ENCODE measurements at regions of chr3 and their contacts with region 1.

Region 1: GRCh38 chr3:119293871-119294695 is at the start of gene ARHGAP31:
- DNase-seq: peak; percentile 46
- H3K4me3 ChIP-seq: peak within 1 kb of the TSS; percentile 89
- H3K27ac ChIP-seq: peak within 1 kb of the TSS; percentile 73
- H3K27me3 ChIP-seq: no peaks in the 10 kb centered on the region
- CTCF ChIP-seq: no peak
- polyA plus RNA-seq, gene ARHGAP31: 14.1 and 16.6 TPM in 2 replicates

Region 2: DNA sequence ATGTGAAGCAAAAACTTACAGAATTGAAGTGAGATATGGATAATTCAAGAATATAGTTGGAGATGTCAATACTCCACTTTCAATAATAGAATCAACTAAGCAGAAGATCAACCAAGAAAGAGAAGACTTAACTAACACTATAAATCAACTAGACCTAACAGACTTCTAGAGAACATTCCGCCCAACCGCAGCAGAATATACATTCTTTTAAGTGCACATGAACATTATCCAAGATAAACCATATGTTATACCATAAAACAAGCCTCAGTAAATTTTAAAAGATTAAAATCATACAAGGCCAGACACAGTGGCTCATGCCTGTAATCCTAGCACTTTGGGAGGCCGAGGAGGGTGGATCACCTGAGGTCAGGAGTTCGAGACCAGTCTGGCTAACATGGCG is 153.6 kb before region 1 on chr3:
- CTCF ChIA-PET with region 1: interaction called, 10 read pairs
- POLR2A ChIA-PET with region 1: no interaction called
- DNase-seq: no peak
- H3K4me3 ChIP-seq: no peak overlapping the region
- H3K27ac ChIP-seq: no peak overlapping the region
- H3K27me3 ChIP-seq: peaks cover 2% of the 10 kb centered on the region
- CTCF ChIP-seq: no peak

Region 3: DNA sequence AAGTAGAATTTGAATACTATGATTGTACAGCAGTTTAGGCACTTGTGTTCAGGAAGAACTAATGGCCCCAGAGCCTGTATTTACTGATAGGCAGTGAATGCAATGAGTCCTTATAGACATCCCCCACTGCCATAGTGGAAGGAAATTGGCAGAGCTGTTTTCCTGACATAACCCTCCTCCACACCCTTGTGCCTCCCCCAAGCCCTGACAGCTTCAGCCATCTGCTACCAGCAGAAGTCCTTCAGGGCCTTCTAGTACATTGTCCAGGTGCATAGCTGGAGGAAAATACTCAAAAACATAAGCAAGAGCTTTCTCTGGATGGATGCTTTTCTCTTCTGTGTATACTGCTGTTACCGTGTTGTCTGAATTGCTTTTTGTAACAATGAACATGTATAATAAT is 20.7 kb after region 1 on chr3:
- CTCF ChIA-PET with region 1: no interaction called
- POLR2A ChIA-PET with region 1: no interaction called
- DNase-seq: no peak
- H3K4me3 ChIP-seq: no peak overlapping the region
- H3K27ac ChIP-seq: no peak overlapping the region
- H3K27me3 ChIP-seq: no peaks in the 10 kb centered on the region
- CTCF ChIP-seq: no peak

Region 4: GRCh38 chr3:119352849-119353502 is 58.9 kb after region 1 on chr3:
- CTCF ChIA-PET with region 1: interaction called, 7 read pairs
- POLR2A ChIA-PET with region 1: interaction called, 12 read pairs
- DNase-seq: peak; percentile 51
- H3K4me3 ChIP-seq: no peak overlapping the region
- H3K27ac ChIP-seq: peak overlapping the region; percentile 88
- H3K27me3 ChIP-seq: no peaks in the 10 kb centered on the region
- CTCF ChIP-seq: peak; percentile 58

Region 5: GRCh38 chr3:119524931-119525662 is 231.0 kb after region 1 on chr3:
- CTCF ChIA-PET with region 1: no interaction called
- POLR2A ChIA-PET with region 1: no interaction called
- DNase-seq: no peak
- H3K4me3 ChIP-seq: no peak overlapping the region
- H3K27ac ChIP-seq: no peak overlapping the region
- H3K27me3 ChIP-seq: no peaks in the 10 kb centered on the region
- CTCF ChIP-seq: peak; percentile 51

Region 6: DNA sequence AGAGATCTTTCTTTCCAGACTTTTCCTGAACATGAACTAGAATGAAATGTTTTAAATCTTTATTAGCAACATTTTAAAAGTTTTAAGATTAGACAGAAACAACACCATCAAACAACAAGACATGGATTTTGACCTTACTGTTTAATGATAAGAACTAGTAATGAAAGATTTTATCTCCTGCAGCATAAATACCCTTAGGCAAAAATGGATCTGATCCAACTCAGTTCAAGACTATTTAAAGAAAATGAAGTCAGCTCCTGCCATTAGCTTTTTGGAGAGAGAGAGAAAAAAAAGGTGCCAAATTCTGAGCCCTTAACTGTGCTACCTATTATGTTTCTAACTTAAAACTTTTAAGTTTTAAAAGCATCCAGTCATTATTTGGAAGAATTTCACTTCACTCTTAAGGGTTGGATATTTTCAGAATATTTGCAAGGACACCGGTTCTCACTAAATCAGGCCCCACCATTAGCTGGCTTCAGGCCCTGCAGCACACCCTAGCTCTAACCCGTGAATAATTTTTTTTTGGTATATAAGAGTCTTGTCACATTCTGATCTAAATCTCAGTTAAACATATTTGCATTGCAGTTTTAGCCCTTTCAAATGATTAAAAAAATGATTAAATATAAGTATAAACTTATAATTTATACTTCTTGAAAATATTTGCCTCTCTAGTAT is 547.9 kb after region 1 on chr3:
- CTCF ChIA-PET with region 1: no interaction called
- POLR2A ChIA-PET with region 1: no interaction called
- DNase-seq: no peak
- H3K4me3 ChIP-seq: no peak overlapping the region
- H3K27ac ChIP-seq: no peak overlapping the region
- H3K27me3 ChIP-seq: no peaks in the 10 kb centered on the region
- CTCF ChIP-seq: no peak

Region 7: DNA sequence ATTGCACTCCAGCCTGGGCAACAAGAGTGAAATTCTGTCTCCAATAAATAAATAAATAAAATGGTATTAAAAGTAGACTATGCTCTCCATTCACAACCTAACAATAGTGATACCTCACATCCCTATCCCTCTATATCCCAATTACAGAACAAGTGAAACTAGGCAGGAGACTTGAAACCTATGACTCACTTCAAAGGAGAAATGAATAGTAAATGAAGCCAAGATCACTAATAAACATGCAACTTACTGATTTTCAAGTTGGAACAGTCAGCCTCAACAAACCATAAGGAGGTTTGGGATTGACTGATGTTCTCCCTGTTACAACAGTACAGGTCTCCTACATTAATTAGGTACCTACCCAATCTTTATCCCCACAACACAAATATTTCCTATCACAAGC is 696.8 kb after region 1 on chr3:
- CTCF ChIA-PET with region 1: no interaction called
- POLR2A ChIA-PET with region 1: no interaction called
- DNase-seq: peak; percentile 6
- H3K4me3 ChIP-seq: no peak overlapping the region
- H3K27ac ChIP-seq: no peak overlapping the region
- H3K27me3 ChIP-seq: no peaks in the 10 kb centered on the region
- CTCF ChIP-seq: no peak